IMR-90 (cell line): ENCODE measurements at regions of chr12 and their contacts with region 1.

Region 1: GRCh38 chr12:112125250-112125999 is at the start of gene TRAFD1:
- DNase-seq: peak; percentile 96
- ATAC-seq: peak; percentile 87
- H3K4me3 ChIP-seq: peak within 1 kb of the TSS; percentile 83
- H3K27ac ChIP-seq: peak within 1 kb of the TSS; percentile 92
- H3K4me1 ChIP-seq: peaks cover 19% of the 10 kb centered on the region
- H3K27me3 ChIP-seq: no peaks in the 10 kb centered on the region
- CTCF ChIP-seq: no peak
- POLR2A ChIP-seq: peak; percentile 97
- RAD21 ChIP-seq: no peak; the same call in 1 of the 2 replicates
- total RNA-seq, gene TRAFD1: 69.7 and 70.4 TPM in 2 replicates

Region 2: DNA sequence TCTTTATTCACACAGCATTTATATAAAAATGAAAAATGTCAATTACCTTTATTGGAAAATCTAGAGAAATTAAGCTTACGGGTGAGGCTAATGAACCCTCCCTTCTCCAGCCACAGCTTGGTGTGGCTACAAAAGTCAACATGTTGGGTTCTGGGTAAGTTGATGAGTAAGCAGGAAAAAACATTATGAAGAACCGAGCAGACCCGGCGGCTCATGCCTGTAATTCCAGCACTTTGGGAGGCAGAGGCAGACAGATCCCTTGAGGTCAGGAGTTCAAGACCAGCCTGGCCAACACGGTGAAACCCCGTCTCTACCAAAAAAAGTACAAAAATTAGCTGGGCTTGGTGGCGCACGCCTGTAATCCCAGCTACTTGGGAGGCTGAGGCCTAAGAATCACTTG is 27.8 kb before region 1 on chr12:
- CTCF ChIA-PET with region 1: no interaction called
- POLR2A ChIA-PET with region 1: interaction called, 14 read pairs
- dilution Hi-C with region 1: no loop called
- in situ Hi-C with region 1: no loop called
- intact Hi-C with region 1: no loop called
- DNase-seq: no peak
- ATAC-seq: no peak
- H3K4me3 ChIP-seq: no peak overlapping the region
- H3K27ac ChIP-seq: peak overlapping the region; percentile 49; the same call in 1 of the 2 replicates
- H3K4me1 ChIP-seq: peaks cover 6% of the 10 kb centered on the region; the same call in 1 of the 2 replicates
- H3K27me3 ChIP-seq: no peaks in the 10 kb centered on the region
- CTCF ChIP-seq: no peak
- POLR2A ChIP-seq: no peak
- RAD21 ChIP-seq: no peak

Region 3: GRCh38 chr12:112108201-112109079 is 17.0 kb before region 1 on chr12 and contains the start of gene NAA25:
- CTCF ChIA-PET with region 1: interaction called, 4 read pairs
- POLR2A ChIA-PET with region 1: interaction called, 3 read pairs
- dilution Hi-C with region 1: no loop called
- in situ Hi-C with region 1: no loop called
- intact Hi-C with region 1: loop called (anchors 2 kb)
- DNase-seq: peak; percentile 79
- ATAC-seq: peak; percentile 85
- H3K4me3 ChIP-seq: peak within 1 kb of the TSS; percentile 66
- H3K27ac ChIP-seq: peak within 1 kb of the TSS; percentile 99
- H3K4me1 ChIP-seq: peaks cover 19% of the 10 kb centered on the region
- H3K27me3 ChIP-seq: no peaks in the 10 kb centered on the region
- CTCF ChIP-seq: no peak
- POLR2A ChIP-seq: peak; percentile 58; the same call in 1 of the 2 replicates
- RAD21 ChIP-seq: no peak
- total RNA-seq, gene NAA25: 25.5 and 28.3 TPM in 2 replicates